Mammary epithelial cell (primary cell): ENCODE measurements at regions of chr12 and their contacts with region 1.

Region 1: GRCh38 chr12:74317078-74317601 is 220.5 kb upstream of the ATXN7L3B start:
- DNase-seq: peak; percentile 21
- H3K4me3 ChIP-seq: no peak overlapping the region
- H3K27ac ChIP-seq: no peak overlapping the region
- H3K4me1 ChIP-seq: no peaks in the 10 kb centered on the region
- H3K27me3 ChIP-seq: peaks cover 2% of the 10 kb centered on the region
- CTCF ChIP-seq: peak; percentile 47 to 58

Region 2: GRCh38 chr12:73935817-73936216 is 381.3 kb before region 1 on chr12:
- CTCF ChIA-PET with region 1: interaction called, 7 read pairs
- dilution Hi-C with region 1: no loop called
- in situ Hi-C with region 1: no loop called
- intact Hi-C with region 1: loop called (anchors 1 kb)
- DNase-seq: peak; percentile 2
- H3K4me3 ChIP-seq: no peak overlapping the region
- H3K27ac ChIP-seq: no peak overlapping the region
- H3K4me1 ChIP-seq: no peaks in the 10 kb centered on the region
- H3K27me3 ChIP-seq: no peaks in the 10 kb centered on the region
- CTCF ChIP-seq: peak; percentile 32 to 63

Region 3: GRCh38 chr12:74111688-74112360 is 205.3 kb before region 1 on chr12:
- CTCF ChIA-PET with region 1: no interaction called
- dilution Hi-C with region 1: no loop called
- in situ Hi-C with region 1: no loop called
- intact Hi-C with region 1: loop called (anchors 1 kb)
- DNase-seq: peak; percentile 65
- H3K4me3 ChIP-seq: no peak overlapping the region
- H3K27ac ChIP-seq: no peak overlapping the region
- H3K4me1 ChIP-seq: no peaks in the 10 kb centered on the region
- H3K27me3 ChIP-seq: no peaks in the 10 kb centered on the region
- CTCF ChIP-seq: peak; percentile 54 to 83

Region 4: DNA sequence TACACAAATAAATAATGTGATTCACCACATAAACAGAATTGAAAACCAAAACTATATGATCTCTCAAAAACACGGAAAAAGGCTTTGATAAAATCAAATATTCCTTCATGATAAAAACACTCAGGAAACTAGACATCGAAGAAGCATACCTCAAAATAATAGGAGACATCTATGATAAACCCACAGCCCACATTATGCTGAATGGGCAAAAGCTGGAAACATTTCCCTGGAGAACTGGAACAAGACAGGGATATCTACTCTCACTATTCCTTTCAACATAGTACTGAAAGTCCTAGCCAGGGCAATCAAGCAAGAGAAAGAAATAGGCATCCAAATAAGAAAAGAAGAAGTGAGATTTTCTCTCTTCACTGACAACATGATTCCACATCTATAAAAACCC is 151.0 kb before region 1 on chr12:
- CTCF ChIA-PET with region 1: no interaction called
- dilution Hi-C with region 1: no loop called
- in situ Hi-C with region 1: no loop called
- intact Hi-C with region 1: no loop called
- DNase-seq: no peak
- H3K4me3 ChIP-seq: no peak overlapping the region
- H3K27ac ChIP-seq: no peak overlapping the region
- H3K4me1 ChIP-seq: no peaks in the 10 kb centered on the region
- H3K27me3 ChIP-seq: no peaks in the 10 kb centered on the region
- CTCF ChIP-seq: no peak

Region 5: GRCh38 chr12:74537707-74538385 is 220.7 kb after region 1 on chr12 and contains the start of gene ATXN7L3B:
- CTCF ChIA-PET with region 1: no interaction called
- dilution Hi-C with region 1: no loop called
- in situ Hi-C with region 1: no loop called
- intact Hi-C with region 1: loop called (anchors 10 kb)
- DNase-seq: peak; percentile 94
- H3K4me3 ChIP-seq: peak within 1 kb of the TSS; percentile 67 to 78 (median 69)
- H3K27ac ChIP-seq: peak within 1 kb of the TSS; percentile 97
- H3K4me1 ChIP-seq: peaks cover 24% of the 10 kb centered on the region
- H3K27me3 ChIP-seq: no peaks in the 10 kb centered on the region
- CTCF ChIP-seq: peak in 1 of 2 donors; percentile 8
- total RNA-seq, gene ATXN7L3B: 22.0 to 22.2 TPM